GM12878 (cell line): ENCODE measurements at regions of chr19 and their contacts with region 1.

Region 1: GRCh38 chr19:45994989-45995714 is at the start of gene CCDC61:
- DNase-seq: peak; percentile 99
- ATAC-seq: peak; percentile 98
- H3K4me3 ChIP-seq: peak within 1 kb of the TSS; percentile 86
- H3K27ac ChIP-seq: peak within 1 kb of the TSS; percentile 66
- H3K4me1 ChIP-seq: peaks cover 9% of the 10 kb centered on the region
- H3K27me3 ChIP-seq: no peaks in the 10 kb centered on the region
- CTCF ChIP-seq: no peak
- EP300 ChIP-seq: no peak
- POLR2A ChIP-seq: peak; percentile 96
- RAD21 ChIP-seq: no peak
- polyA plus RNA-seq, gene CCDC61: 0.27 to 0.95 TPM

Region 2: DNA sequence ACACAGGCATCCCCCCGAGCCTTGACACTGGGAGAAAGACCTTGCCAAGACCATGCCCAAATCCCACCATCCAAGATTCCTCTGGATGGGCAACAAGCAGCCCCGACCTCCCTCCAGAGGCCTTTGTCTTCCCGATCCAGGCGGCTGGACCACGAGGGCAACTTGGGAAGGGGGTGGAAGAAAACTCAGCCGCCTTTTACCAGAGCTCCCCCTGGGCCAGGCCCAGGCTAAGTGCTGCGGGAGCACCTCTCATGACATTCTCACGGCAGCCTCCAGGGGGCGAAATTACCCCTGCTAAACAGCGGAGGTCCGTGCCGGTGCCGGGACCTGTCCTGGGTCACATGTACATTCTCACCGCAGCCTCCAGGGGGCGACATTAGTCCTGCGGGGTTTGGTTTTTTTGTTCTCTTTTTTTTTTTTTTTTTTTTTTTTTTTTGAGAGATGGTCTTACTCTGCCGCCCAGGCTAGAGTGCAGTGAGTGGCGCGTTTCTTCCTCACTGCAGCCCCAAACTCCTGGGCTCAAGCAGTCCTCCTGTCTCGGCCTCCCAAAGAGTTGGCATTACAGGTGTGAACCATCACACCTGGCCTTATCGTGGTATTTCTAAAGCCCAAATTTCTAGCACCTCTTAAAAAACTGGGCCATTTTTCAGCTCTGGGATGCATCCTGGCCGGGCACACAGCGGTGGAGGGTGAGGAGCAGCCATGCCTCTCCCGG is 178.0 kb before region 1 on chr19:
- CTCF ChIA-PET with region 1: interaction called, 5 read pairs
- POLR2A ChIA-PET with region 1: no interaction called
- RAD21 ChIA-PET with region 1: interaction called, 6 read pairs
- SMC1A ChIA-PET with region 1: no interaction called
- in situ Hi-C with region 1: no loop called
- intact Hi-C with region 1: loop called (anchors 10 kb)
- DNase-seq: peak; percentile 75
- ATAC-seq: peak; percentile 99
- H3K4me3 ChIP-seq: no peak overlapping the region
- H3K27ac ChIP-seq: no peak overlapping the region
- H3K4me1 ChIP-seq: no peaks in the 10 kb centered on the region
- H3K27me3 ChIP-seq: no peaks in the 10 kb centered on the region
- CTCF ChIP-seq: peak; percentile 96 to 100 (median 98)
- EP300 ChIP-seq: no peak
- POLR2A ChIP-seq: no peak
- RAD21 ChIP-seq: peak; percentile 70

Region 3: DNA sequence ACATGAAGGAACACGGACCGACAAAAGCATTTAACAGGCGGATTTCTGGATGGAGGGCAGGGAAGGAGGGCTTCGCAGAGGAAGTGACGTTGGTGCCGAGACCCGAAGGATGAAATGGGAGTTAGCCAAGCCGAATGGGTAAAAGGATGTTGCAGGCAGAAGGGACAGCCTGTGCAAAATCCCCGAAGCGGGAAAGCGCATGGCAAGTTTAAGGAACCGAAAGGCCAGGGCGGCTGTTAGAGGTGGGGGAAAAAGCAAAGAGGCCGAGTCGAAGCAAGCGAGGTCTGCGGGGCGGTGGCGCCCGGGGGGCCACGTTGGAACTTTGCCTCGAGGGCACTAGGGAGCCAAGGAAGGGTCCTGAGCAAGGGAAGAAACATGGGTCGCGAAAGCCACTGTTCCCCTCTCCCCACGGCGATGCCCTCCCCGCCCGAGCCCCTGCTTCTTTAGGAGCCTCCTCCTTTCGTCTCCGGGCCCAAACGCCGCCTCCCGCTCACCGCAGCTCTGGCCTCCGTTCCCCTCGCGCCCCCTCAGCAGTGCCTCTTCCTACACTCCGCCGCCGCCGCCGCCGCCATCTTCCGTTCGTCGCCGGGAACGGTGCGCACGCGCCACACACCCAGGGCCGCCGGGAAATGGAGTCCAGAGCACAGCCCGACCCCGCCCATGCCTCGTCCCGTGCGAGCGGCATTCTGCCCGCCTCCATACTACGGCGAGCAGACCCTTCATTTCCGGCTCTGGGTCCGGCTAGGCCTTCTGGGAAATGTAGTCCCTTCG is 132.4 kb before region 1 on chr19 and contains the start of gene SYMPK:
- CTCF ChIA-PET with region 1: interaction called, 3 read pairs
- POLR2A ChIA-PET with region 1: interaction called, 8 read pairs
- RAD21 ChIA-PET with region 1: interaction called, 14 read pairs
- SMC1A ChIA-PET with region 1: interaction called, 3 read pairs
- in situ Hi-C with region 1: no loop called
- intact Hi-C with region 1: no loop called
- DNase-seq: peak; percentile 94
- ATAC-seq: peak; percentile 94
- H3K4me3 ChIP-seq: peak within 1 kb of the TSS; percentile 97
- H3K27ac ChIP-seq: peak within 1 kb of the TSS; percentile 93
- H3K4me1 ChIP-seq: peaks cover 5% of the 10 kb centered on the region
- H3K27me3 ChIP-seq: peaks cover 0 to 6% of the 10 kb centered on the region in 2 experiments; a peak in 2 of 4 replicates
- CTCF ChIP-seq: no peak
- EP300 ChIP-seq: 0 out of 4 replicates have a peak, but pooled peaks of 1 of the 2 experiments have one; percentile 10
- POLR2A ChIP-seq: peak; percentile 92
- RAD21 ChIP-seq: no peak
- polyA plus RNA-seq, gene SYMPK: 0.49 to 0.79 TPM

Region 4: GRCh38 chr19:45886427-45887199 is 108.5 kb before region 1 on chr19:
- CTCF ChIA-PET with region 1: interaction called, 6 read pairs
- POLR2A ChIA-PET with region 1: interaction called, 10 read pairs
- RAD21 ChIA-PET with region 1: interaction called, 6 read pairs
- SMC1A ChIA-PET with region 1: interaction called, 4 read pairs
- in situ Hi-C with region 1: no loop called
- intact Hi-C with region 1: no loop called
- DNase-seq: peak; percentile 73
- ATAC-seq: peak; percentile 75
- H3K4me3 ChIP-seq: peak overlapping the region; percentile 68
- H3K27ac ChIP-seq: peak overlapping the region; percentile 95
- H3K4me1 ChIP-seq: peaks cover 20% of the 10 kb centered on the region
- H3K27me3 ChIP-seq: no peaks in the 10 kb centered on the region
- CTCF ChIP-seq: no peak
- EP300 ChIP-seq: no peak; a peak in 1 of 4 replicates
- POLR2A ChIP-seq: peak; percentile 63
- RAD21 ChIP-seq: no peak

Region 5: GRCh38 chr19:46009530-46010510 is 14.7 kb after region 1 on chr19:
- CTCF ChIA-PET with region 1: interaction called, 12 read pairs
- POLR2A ChIA-PET with region 1: interaction called, 9 read pairs
- RAD21 ChIA-PET with region 1: no interaction called
- SMC1A ChIA-PET with region 1: interaction called, 3 read pairs
- in situ Hi-C with region 1: no loop called
- intact Hi-C with region 1: no loop called
- DNase-seq: no peak
- ATAC-seq: peak; percentile 85
- H3K4me3 ChIP-seq: no peak overlapping the region
- H3K27ac ChIP-seq: no peak overlapping the region
- H3K4me1 ChIP-seq: no peaks in the 10 kb centered on the region; the same call in 1 of the 2 replicates
- H3K27me3 ChIP-seq: no peaks in the 10 kb centered on the region
- CTCF ChIP-seq: peak; percentile 74 to 85 (median 84)
- EP300 ChIP-seq: no peak
- POLR2A ChIP-seq: no peak
- RAD21 ChIP-seq: no peak

Region 6: GRCh38 chr19:46016426-46017094 is 21.4 kb after region 1 on chr19:
- CTCF ChIA-PET with region 1: interaction called, 11 read pairs
- POLR2A ChIA-PET with region 1: interaction called, 4 read pairs
- RAD21 ChIA-PET with region 1: no interaction called
- SMC1A ChIA-PET with region 1: no interaction called
- in situ Hi-C with region 1: no loop called
- intact Hi-C with region 1: no loop called
- DNase-seq: peak; percentile 11
- ATAC-seq: peak; percentile 89
- H3K4me3 ChIP-seq: peak overlapping the region; percentile 74; the same call in 1 of the 2 replicates
- H3K27ac ChIP-seq: no peak overlapping the region
- H3K4me1 ChIP-seq: peaks cover 5% of the 10 kb centered on the region
- H3K27me3 ChIP-seq: no peaks in the 10 kb centered on the region
- CTCF ChIP-seq: peak; percentile 72 to 88 (median 77)
- EP300 ChIP-seq: no peak
- POLR2A ChIP-seq: no peak
- RAD21 ChIP-seq: peak; percentile 31; the same call in 1 of the 2 replicates